ENCODE measurements at regions of chr2 and their contacts with region 1.

Region 1: GRCh38 chr2:118855451-118856279 is 8.2 kb upstream of the EN1 start:
- DNase-seq: peak; percentile 44 to 82
- ATAC-seq: peak; percentile 95

Region 2: GRCh38 chr2:118202707-118203303 is 652.9 kb before region 1 on chr2:
- intact Hi-C with region 1: loop called in 1 of 2 experiments (anchors 10 kb)
- DNase-seq: peak in 1 of 2 donors; percentile 34
- ATAC-seq: peak; percentile 44

Region 3: DNA sequence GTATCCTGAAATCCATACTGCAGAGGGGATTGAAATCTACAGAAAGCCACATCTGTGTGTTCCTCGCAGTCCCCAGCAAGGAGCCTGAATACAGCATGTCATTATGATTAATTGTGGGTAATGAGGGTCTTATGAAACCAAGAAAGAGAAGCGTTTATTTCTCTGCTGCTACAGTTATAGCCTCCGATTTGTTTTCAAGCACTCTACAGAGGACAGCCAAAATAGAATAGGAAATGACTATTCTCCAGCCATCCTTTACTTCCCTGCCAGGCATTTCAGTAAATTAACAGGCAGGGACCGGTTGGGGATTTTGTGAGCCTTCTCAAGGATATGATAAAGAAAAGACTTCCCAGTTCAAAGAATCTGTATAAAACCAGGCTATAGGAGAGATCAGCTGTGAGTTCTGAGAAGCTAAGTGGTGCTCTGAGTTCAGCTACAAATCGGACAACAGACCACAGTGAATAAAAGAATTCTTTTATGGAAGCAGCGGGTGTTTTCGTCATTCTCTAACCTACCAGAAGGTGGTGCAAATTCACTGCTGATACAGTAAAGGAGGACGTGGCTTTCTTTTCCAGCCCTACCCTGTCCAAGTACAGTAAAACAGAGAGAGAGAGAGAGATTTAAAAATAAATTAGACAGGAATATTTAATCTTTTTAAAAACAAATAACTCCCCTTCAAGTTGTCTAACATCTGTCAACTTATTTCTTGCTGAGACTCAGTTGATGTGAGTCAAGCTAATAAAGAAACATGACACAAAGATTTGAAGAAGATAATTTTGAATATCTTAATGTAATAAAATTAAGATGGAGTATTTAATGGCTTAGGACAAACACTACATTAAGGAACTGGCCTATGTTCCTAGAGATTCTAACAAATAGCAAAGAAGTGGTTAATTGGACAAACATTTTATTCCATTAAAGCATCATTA is 633.7 kb before region 1 on chr2:
- intact Hi-C with region 1: loop called in 1 of 2 experiments (anchors 5 kb)
- DNase-seq: no peak
- ATAC-seq: peak; percentile 84